Heart left ventricle (tissue), 16 donors: ENCODE measurements at regions of chr11 and their contacts with region 1.

Region 1: DNA sequence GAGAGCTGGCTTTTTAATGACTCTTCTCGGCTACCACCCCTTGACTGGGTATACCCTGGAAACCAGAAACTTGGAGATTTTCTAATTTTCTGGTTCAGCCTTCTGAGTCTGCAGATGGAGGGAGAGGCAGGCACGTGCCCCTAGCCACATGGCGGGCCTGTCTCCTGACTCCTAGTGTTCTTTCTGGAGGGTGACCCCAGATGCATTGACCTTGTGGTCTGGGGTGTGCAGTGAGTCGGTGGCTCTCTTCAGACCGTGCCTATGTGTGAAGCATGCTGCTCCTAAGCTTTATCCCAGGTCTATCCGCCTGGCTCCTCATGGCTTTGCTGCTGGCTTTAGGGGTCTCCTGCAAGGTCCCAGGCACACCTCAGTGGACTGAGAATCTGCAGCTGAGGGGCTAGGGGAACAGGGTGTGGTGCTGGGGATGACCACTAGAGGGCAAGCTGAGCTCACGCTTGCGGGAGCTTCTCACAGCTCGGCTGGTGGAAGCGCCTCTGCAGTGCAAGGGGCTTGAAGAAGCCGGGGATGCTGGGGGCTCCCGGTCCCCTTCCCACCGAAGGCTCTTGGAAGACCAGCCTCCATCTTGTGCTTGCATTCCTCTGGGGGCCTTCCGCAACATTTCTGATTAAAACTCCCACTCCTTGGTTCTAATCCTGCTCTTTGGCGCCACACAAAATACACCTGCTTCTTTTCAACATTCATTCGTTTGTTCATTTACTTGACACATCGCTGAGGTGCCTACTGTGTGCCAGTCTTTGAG is 51.8 kb downstream of the OTOG start:
- DNase-seq: peak; percentile 51 to 77 (median 67)
- ATAC-seq: peak; percentile 37 to 90 (median 78)
- H3K4me3 ChIP-seq: no peak overlapping the region
- H3K27ac ChIP-seq: no peak overlapping the region
- H3K4me1 ChIP-seq: no peaks in the 10 kb centered on the region
- H3K27me3 ChIP-seq: peaks cover 0 to 13% (median 0%) of the 10 kb centered on the region in 9 donors
- CTCF ChIP-seq: peak; percentile 78 to 94 (median 90)
- POLR2A ChIP-seq: no peak

Region 2: GRCh38 chr11:17371614-17372013 is 227.3 kb before region 1 on chr11:
- intact Hi-C with region 1: no loop called
- DNase-seq: no peak
- ATAC-seq: no peak
- H3K4me3 ChIP-seq: no peak overlapping the region
- H3K27ac ChIP-seq: no peak overlapping the region
- H3K4me1 ChIP-seq: peaks cover 0 to 8% (median 0%) of the 10 kb centered on the region in 12 donors
- H3K27me3 ChIP-seq: no peaks in the 10 kb centered on the region
- CTCF ChIP-seq: no peak
- POLR2A ChIP-seq: no peak

Region 3: DNA sequence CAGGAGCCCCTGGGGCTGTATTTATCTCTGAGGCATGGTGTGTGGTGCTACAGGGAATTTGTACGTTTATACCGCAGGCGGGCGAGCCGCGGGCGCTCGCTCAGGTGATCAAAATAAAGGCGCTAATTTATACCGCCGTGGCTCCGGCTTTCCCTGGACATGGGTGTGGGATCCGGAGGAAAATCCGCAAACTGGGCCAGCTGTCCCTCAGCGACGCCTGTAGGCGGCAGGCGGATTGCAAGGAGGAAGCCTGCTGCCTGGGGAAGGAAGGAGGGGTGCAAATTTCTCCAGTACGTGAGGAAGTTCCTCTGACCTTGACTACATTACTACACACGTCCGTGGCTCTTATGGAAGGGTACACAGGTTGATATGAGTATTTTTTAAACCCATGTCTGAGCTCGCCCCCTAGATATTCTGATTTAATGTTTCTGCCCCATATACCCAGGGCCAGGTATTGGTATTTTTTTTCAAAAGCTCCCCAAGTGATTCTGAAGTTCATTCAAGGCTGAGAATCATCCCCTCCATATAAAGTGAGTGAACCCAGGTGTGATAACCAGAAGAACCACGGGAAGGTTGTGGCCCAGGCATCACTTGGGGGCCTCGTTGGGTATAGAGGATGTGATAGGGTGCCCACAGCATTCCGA is 123.2 kb after region 1 on chr11:
- intact Hi-C with region 1: loop called in 8 of 10 experiments (anchors 1 to 5 kb)
- DNase-seq: no peak
- ATAC-seq: peak in 1 of 4 donors; percentile 18
- H3K4me3 ChIP-seq: no peak overlapping the region
- H3K27ac ChIP-seq: no peak overlapping the region
- H3K4me1 ChIP-seq: peaks cover 0 to 33% (median 10%) of the 10 kb centered on the region in 12 donors
- H3K27me3 ChIP-seq: peaks cover 22 to 77% (median 37%) of the 10 kb centered on the region in 9 donors
- CTCF ChIP-seq: peak in 6 of 12 donors; percentile 15 to 43 (median 28)
- POLR2A ChIP-seq: no peak

Region 4: DNA sequence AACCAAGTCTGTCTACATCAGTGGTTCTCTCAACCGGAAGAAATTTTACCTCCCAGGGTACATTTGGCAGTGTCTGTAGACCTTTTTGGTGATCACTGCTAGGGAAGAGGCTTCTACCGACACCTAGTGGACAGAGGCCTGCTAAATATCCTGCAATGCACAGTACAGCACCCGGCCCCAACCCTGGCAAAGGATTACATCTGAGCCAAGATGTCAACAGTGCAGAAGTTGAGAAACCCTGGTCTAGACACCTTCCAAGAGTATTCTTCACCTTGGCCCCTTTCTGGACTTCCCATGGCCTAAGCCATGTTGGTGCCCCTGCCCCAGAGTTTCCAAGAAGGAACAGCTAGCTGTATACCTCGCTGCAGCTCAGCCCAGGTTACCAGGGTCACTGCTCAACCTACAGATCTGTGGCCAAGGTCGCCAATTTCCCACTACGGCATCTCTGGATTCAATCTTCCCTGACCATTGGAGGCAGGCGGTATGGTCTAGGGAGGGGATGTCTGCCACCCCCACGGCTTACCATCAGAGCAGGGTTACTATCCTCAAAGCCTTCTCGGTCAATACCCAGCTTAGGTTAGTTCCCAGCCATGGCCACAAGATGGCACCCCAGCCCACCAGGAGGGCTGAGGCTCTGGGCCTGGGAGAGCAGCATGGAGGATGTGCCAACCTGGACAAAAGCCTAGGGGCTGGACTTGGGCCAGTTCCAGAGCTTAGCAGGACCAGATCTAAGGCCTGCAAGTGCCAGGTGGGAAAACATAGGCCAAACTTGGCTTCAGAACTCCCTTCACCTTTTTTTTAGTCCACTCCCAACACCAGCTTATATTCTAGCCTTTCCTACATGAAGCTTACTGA is 132.0 kb after region 1 on chr11:
- intact Hi-C with region 1: loop called in 2 of 10 experiments (anchors 2 to 5 kb)
- DNase-seq: peak; percentile 77 to 85 (median 84)
- ATAC-seq: peak; percentile 90 to 94 (median 92)
- H3K4me3 ChIP-seq: no peak overlapping the region
- H3K27ac ChIP-seq: no peak overlapping the region
- H3K4me1 ChIP-seq: peaks cover 2 to 20% (median 7%) of the 10 kb centered on the region in 12 donors
- H3K27me3 ChIP-seq: peaks cover 2 to 44% (median 11%) of the 10 kb centered on the region in 9 donors
- CTCF ChIP-seq: peak; percentile 73 to 91 (median 86)
- POLR2A ChIP-seq: no peak